ENCODE measurements at regions of chr3 and their contacts with region 1.

Region 1: DNA sequence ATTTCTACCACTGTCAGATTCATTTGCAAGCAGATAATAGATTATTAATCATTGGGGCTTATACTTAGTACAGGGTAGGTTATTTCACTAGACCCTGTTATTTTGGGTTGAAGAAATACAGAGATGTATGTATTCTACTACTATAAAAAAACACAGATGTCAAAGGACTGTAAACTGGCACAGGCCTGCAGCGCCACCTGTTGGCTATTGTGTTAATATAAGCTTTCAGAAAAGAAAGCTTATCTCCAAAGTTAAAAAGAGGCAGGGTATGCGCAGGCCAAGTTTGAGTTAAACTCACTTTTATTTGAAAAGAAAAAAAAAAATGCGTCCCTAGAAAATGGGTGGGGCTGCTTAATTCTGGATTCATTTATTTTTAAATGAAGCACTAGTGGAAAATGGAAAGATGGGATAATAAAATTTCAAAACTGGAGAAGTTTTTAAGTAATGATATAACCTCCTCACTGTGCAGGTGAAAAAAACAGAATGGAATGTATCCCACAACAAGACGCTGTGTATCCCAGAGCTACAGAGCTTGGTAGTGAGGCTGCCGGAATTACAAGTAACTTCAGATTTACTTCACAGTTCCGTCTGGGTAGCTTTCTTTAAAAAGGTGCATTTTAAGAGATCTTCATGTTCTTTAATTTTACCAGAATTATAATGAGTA is 407.2 kb upstream of the TGFBR2 start:
- DNase-seq: peak; percentile 65
- ATAC-seq: peak; percentile 43
- H3K4me3 ChIP-seq: no peak overlapping the region
- H3K4me3 Mint-ChIP-seq: no peak overlapping the region
- H3K27ac ChIP-seq: no peak overlapping the region
- H3K27ac Mint-ChIP-seq: no peak overlapping the region
- H3K4me1 ChIP-seq: peaks cover 0 to 3% of the 10 kb centered on the region in 2 donors
- H3K4me1 Mint-ChIP-seq: peaks cover 15% of the 10 kb centered on the region
- H3K27me3 ChIP-seq: no peaks in the 10 kb centered on the region
- H3K27me3 Mint-ChIP-seq: no peaks in the 10 kb centered on the region
- CTCF ChIP-seq: peak; percentile 96

Region 2: DNA sequence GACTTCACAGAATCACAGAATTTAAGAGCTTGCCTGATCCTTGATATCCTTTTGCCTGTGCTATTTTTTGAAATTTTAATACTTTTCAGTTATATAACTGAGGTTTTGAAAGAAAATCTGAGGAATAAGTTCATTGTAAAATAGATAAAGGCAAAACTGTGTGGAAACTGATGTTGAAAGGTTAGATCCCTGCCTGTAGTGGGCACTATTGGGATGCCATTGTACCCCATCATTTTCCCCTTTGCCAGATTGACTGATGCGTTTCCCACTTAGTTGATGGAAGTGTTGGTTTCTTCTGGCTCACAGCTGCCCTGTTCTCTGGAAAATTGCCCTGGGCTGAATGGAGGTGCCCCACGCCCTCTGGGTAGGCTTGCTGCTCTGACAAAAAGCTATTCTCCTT is 530.5 kb before region 1 on chr3:
- CTCF ChIA-PET with region 1: no interaction called
- POLR2A ChIA-PET with region 1: no interaction called
- intact Hi-C with region 1: no loop called
- DNase-seq: no peak
- ATAC-seq: no peak
- H3K4me3 ChIP-seq: no peak overlapping the region
- H3K4me3 Mint-ChIP-seq: no peak overlapping the region
- H3K27ac ChIP-seq: no peak overlapping the region
- H3K27ac Mint-ChIP-seq: no peak overlapping the region
- H3K4me1 ChIP-seq: no peaks in the 10 kb centered on the region
- H3K4me1 Mint-ChIP-seq: no peaks in the 10 kb centered on the region
- H3K27me3 ChIP-seq: no peaks in the 10 kb centered on the region
- H3K27me3 Mint-ChIP-seq: no peaks in the 10 kb centered on the region
- CTCF ChIP-seq: no peak

Region 3: GRCh38 chr3:30012941-30013543 is 186.2 kb before region 1 on chr3:
- CTCF ChIA-PET with region 1: interaction called, 21 read pairs
- POLR2A ChIA-PET with region 1: no interaction called
- intact Hi-C with region 1: loop called (anchors 2 kb)
- DNase-seq: peak; percentile 50
- ATAC-seq: no peak
- H3K4me3 ChIP-seq: no peak overlapping the region
- H3K4me3 Mint-ChIP-seq: no peak overlapping the region
- H3K27ac ChIP-seq: no peak overlapping the region
- H3K27ac Mint-ChIP-seq: no peak overlapping the region
- H3K4me1 ChIP-seq: no peaks in the 10 kb centered on the region
- H3K4me1 Mint-ChIP-seq: no peaks in the 10 kb centered on the region
- H3K27me3 ChIP-seq: no peaks in the 10 kb centered on the region
- H3K27me3 Mint-ChIP-seq: peaks cover 10% of the 10 kb centered on the region
- CTCF ChIP-seq: peak; percentile 72

Region 4: DNA sequence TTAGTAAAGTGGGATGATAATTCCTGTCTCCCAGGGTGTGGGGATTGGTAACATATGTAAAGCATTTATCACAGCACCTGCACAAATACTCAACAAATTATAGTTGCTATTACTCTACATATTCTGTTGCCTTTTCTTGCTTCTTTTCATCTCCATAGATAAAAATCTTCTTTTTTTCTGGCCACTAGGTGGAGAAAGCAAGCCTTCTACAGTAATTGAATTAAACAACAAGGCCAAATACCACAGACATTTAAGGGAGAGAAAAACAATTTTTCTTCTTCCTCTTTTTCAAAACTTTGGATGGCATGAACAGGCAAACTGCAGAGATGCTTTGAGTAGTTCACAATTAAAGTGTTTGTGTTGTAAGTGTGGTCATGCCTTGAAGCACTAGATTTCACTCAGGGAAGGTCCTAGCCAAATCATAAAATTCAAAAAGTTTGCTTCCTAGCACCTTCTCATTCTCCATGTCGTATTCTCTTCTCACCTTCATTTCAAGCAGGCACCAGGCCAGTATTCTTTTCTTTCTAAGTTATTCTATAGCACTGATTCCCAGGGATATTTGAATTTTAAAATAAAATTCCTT is 86.2 kb before region 1 on chr3:
- CTCF ChIA-PET with region 1: interaction called, 80 read pairs
- POLR2A ChIA-PET with region 1: no interaction called
- intact Hi-C with region 1: loop called (anchors 1 kb)
- DNase-seq: peak; percentile 58
- ATAC-seq: peak; percentile 41
- H3K4me3 ChIP-seq: no peak overlapping the region
- H3K4me3 Mint-ChIP-seq: no peak overlapping the region
- H3K27ac ChIP-seq: no peak overlapping the region
- H3K27ac Mint-ChIP-seq: no peak overlapping the region
- H3K4me1 ChIP-seq: no peaks in the 10 kb centered on the region
- H3K4me1 Mint-ChIP-seq: peaks cover 6% of the 10 kb centered on the region
- H3K27me3 ChIP-seq: no peaks in the 10 kb centered on the region
- H3K27me3 Mint-ChIP-seq: no peaks in the 10 kb centered on the region
- CTCF ChIP-seq: peak; percentile 73

Region 5: GRCh38 chr3:30188713-30189112 is 10.5 kb before region 1 on chr3:
- CTCF ChIA-PET with region 1: interaction called, 27 read pairs
- POLR2A ChIA-PET with region 1: no interaction called
- intact Hi-C with region 1: no loop called
- DNase-seq: no peak
- ATAC-seq: no peak
- H3K4me3 ChIP-seq: no peak overlapping the region
- H3K4me3 Mint-ChIP-seq: no peak overlapping the region
- H3K27ac ChIP-seq: no peak overlapping the region
- H3K27ac Mint-ChIP-seq: no peak overlapping the region
- H3K4me1 ChIP-seq: peaks cover 0 to 3% of the 10 kb centered on the region in 2 donors
- H3K4me1 Mint-ChIP-seq: peaks cover 4% of the 10 kb centered on the region
- H3K27me3 ChIP-seq: peaks cover 0 to 3% (median 0%) of the 10 kb centered on the region in 4 experiments
- H3K27me3 Mint-ChIP-seq: peaks cover 10% of the 10 kb centered on the region
- CTCF ChIP-seq: no peak

Region 6: GRCh38 chr3:30702828-30703397 is 503.7 kb after region 1 on chr3:
- CTCF ChIA-PET with region 1: interaction called, 113 read pairs
- POLR2A ChIA-PET with region 1: no interaction called
- intact Hi-C with region 1: no loop called
- DNase-seq: no peak
- ATAC-seq: no peak
- H3K4me3 ChIP-seq: no peak overlapping the region
- H3K4me3 Mint-ChIP-seq: no peak overlapping the region
- H3K27ac ChIP-seq: no peak overlapping the region
- H3K27ac Mint-ChIP-seq: peak overlapping the region; percentile 35
- H3K4me1 ChIP-seq: no peaks in the 10 kb centered on the region
- H3K4me1 Mint-ChIP-seq: peaks cover 5% of the 10 kb centered on the region
- H3K27me3 ChIP-seq: no peaks in the 10 kb centered on the region
- H3K27me3 Mint-ChIP-seq: no peaks in the 10 kb centered on the region
- CTCF ChIP-seq: no peak